IMR-90 (cell line): ENCODE measurements at regions of chr5 and their contacts with region 1.

Region 1: DNA sequence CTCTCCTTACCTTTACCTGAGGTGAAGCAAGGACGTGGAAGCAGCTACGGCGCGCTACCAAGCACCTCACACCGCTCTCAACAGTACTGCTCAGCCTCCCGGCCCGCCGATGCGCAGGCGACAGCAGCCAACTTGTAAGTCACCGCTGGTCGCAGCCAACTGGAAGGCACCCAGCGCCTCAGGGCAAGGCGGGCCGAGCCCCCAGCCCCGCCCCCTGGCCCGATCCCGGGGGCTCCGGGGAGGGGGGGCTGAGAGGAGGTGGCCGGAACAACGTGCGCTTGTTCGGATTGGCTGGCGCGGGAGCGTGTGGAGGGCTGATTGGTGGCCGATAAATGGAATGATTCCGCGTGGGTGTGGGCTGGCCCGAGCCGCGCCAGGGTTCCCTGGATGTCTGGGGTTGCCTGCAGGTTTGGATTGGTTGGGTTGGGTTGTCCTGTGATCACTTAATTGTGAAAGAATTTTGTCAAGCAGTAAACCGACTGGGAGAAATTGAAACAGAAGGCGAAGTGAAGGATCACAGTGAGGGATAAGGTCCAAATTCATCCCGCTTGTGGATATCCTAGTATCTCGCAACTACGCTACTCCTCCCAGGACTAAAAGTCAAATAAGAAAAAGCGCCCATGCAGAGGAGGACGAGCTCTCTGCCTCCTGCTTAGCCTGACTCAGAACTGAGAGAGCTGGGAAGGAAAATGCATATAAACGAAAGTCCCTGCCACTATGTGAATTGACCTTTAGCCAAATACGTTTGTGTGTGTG is at the start of gene STARD4:
- DNase-seq: peak; percentile 92
- ATAC-seq: peak; percentile 97
- H3K4me3 ChIP-seq: peak within 1 kb of the TSS; percentile 74
- H3K27ac ChIP-seq: peak within 1 kb of the TSS; percentile 56
- H3K4me1 ChIP-seq: no peaks in the 10 kb centered on the region
- H3K27me3 ChIP-seq: no peaks in the 10 kb centered on the region
- CTCF ChIP-seq: no peak
- POLR2A ChIP-seq: peak; percentile 58; the same call in 1 of the 2 replicates
- RAD21 ChIP-seq: no peak
- total RNA-seq, gene STARD4: 30.3 and 63.0 TPM in 2 replicates

Region 2: DNA sequence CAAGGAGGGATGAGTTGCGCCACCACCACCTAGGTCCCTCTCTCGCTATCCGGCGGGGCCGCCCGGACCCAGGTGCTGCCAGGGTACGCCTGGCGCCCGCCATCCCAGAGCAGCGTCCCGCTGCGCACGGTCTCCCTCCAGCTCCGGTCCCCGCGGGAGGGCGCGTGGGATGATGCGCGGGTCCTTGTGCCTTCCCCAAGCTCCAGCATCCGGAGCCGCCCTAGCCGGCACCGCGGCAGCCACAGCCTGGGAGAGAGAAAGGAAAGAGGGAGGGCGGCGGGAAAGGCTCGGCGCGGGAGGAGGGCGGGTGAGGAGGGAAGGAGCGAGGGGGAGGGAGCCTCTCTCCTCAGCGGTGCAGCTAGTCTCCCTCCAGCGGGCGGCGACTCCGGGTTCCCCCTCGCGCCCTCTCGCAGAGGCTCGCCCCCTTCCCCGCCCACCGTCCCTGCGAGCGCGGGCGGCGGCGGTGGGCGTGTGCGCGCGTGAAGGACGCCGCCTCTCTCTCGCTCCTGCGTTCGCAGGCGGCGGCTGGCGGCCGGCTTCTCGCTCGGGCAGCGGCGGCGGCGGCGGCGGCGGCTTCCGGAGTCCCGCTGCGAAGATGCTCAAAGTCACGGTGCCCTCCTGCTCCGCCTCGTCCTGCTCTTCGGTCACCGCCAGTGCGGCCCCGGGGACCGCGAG is 288.5 kb before region 1 on chr5 and contains the start of gene CAMK4:
- CTCF ChIA-PET with region 1: no interaction called
- POLR2A ChIA-PET with region 1: no interaction called
- dilution Hi-C with region 1: no loop called
- in situ Hi-C with region 1: no loop called
- intact Hi-C with region 1: loop called (anchors 2 kb)
- DNase-seq: peak; percentile 73
- ATAC-seq: peak; percentile 97
- H3K4me3 ChIP-seq: peak within 1 kb of the TSS; percentile 86
- H3K27ac ChIP-seq: peak within 1 kb of the TSS; percentile 9; the same call in 1 of the 2 replicates
- H3K4me1 ChIP-seq: no peaks in the 10 kb centered on the region; the same call in 1 of the 2 replicates
- H3K27me3 ChIP-seq: no peaks in the 10 kb centered on the region
- CTCF ChIP-seq: peak; percentile 22; the same call in 1 of the 2 replicates
- POLR2A ChIP-seq: no peak
- RAD21 ChIP-seq: no peak
- total RNA-seq, gene CAMK4: 4.8 and 6.7 TPM in 2 replicates